Posterior cingulate gyrus (tissue), 11 donors: ENCODE measurements at regions of chr4 and their contacts with region 1.

Region 1: GRCh38 chr4:170027181-170027829 is 1.1 kb upstream of the MFAP3L start:
- DNase-seq: peak; percentile 87 to 98 (median 93)

Region 2: GRCh38 chr4:169810325-169811323 is 216.7 kb before region 1 on chr4:
- intact Hi-C with region 1: loop called (anchors 5 kb)
- DNase-seq: no peak

Region 3: GRCh38 chr4:170465434-170465833 is 438.1 kb after region 1 on chr4:
- intact Hi-C with region 1: no loop called
- DNase-seq: no peak